Heart right ventricle (tissue), 16 donors: ENCODE measurements at regions of chr5 and their contacts with region 1.

Region 1: GRCh38 chr5:101084353-101084752 is 181.3 kb upstream of the ST8SIA4 start:
- DNase-seq: no peak
- ATAC-seq: no peak
- H3K4me3 ChIP-seq: no peak overlapping the region
- H3K27ac ChIP-seq: no peak overlapping the region
- H3K4me1 ChIP-seq: peaks cover 0 to 11% (median 4%) of the 10 kb centered on the region in 9 donors
- H3K27me3 ChIP-seq: no peaks in the 10 kb centered on the region
- CTCF ChIP-seq: no peak

Region 2: GRCh38 chr5:101068295-101068694 is 16.1 kb before region 1 on chr5:
- intact Hi-C with region 1: loop called in 1 of 10 experiments (anchors 2 kb)
- DNase-seq: no peak
- ATAC-seq: no peak
- H3K4me3 ChIP-seq: no peak overlapping the region
- H3K27ac ChIP-seq: no peak overlapping the region
- H3K4me1 ChIP-seq: no peaks in the 10 kb centered on the region
- H3K27me3 ChIP-seq: no peaks in the 10 kb centered on the region
- CTCF ChIP-seq: no peak

Region 3: DNA sequence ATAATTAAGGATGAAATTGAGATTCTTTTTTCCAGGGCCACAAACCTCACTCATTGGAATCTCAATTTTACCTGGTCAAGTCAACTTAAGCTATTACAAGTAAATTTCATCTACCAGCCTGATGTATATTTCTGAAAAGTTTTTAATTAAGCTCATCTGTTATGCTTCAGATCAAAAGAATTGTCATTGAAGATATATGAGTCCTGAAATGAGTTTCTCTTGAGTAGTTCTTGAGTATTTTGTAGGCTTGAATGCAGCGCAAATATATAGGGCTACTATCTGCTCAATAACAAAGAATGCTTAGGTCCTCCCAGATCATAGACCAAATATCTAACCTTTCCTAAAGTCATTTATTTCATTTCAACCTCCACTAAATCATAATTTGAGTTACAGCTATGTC is 300.9 kb after region 1 on chr5:
- intact Hi-C with region 1: no loop called
- DNase-seq: no peak
- ATAC-seq: no peak
- H3K4me3 ChIP-seq: no peak overlapping the region
- H3K27ac ChIP-seq: no peak overlapping the region
- H3K4me1 ChIP-seq: no peaks in the 10 kb centered on the region
- H3K27me3 ChIP-seq: no peaks in the 10 kb centered on the region
- CTCF ChIP-seq: no peak

Region 4: DNA sequence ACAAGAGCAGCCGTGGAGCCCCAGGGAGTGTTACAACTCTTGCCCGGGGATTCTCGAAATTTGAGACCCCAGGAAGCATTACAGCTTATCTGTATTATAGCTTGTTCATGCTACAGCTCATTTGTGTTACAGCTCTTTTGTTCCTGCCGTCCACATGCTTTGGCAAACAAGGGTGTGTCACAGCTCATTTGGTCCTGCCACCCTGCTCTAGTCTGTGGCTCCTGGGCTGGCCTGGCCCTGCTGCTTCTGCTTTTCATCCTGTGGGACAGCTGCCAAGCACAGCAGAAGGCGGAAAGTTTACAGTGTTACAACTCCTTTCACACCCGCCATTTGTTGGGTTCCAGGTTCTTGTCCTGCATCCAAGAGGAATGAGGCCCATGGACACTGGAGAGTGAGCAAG is 526.7 kb after region 1 on chr5:
- intact Hi-C with region 1: no loop called
- DNase-seq: no peak
- ATAC-seq: no peak
- H3K4me3 ChIP-seq: no peak overlapping the region
- H3K27ac ChIP-seq: no peak overlapping the region
- H3K4me1 ChIP-seq: no peaks in the 10 kb centered on the region
- H3K27me3 ChIP-seq: no peaks in the 10 kb centered on the region
- CTCF ChIP-seq: no peak